Spleen (tissue), 13 donors: ENCODE measurements at regions of chr9 and their contacts with region 1.

Region 1: GRCh38 chr9:20622330-20623020 is at the start of gene MLLT3:
- DNase-seq: peak; percentile 99
- H3K4me3 ChIP-seq: peak within 1 kb of the TSS; percentile 80 to 95 (median 90)
- H3K27ac ChIP-seq: peak within 1 kb of the TSS; percentile 70 to 91 (median 87)
- H3K4me1 ChIP-seq: peaks cover 11 to 68% (median 34%) of the 10 kb centered on the region in 6 donors
- H3K27me3 ChIP-seq: peaks cover 0 to 15% (median 0%) of the 10 kb centered on the region in 7 donors
- CTCF ChIP-seq: no peak
- POLR2A ChIP-seq: peak in 1 of 3 donors; percentile 58
- total RNA-seq, gene MLLT3: 9.3 to 15.2 (median 12.4) TPM

Region 2: GRCh38 chr9:20361656-20362570 is 260.6 kb before region 1 on chr9:
- intact Hi-C with region 1: loop called (anchors 10 kb)
- DNase-seq: no peak
- H3K4me3 ChIP-seq: no peak overlapping the region
- H3K27ac ChIP-seq: no peak overlapping the region
- H3K4me1 ChIP-seq: peaks cover 0 to 8% (median 0%) of the 10 kb centered on the region in 6 donors
- H3K27me3 ChIP-seq: no peaks in the 10 kb centered on the region
- CTCF ChIP-seq: no peak
- POLR2A ChIP-seq: no peak

Region 3: GRCh38 chr9:20684035-20684872 is 61.8 kb after region 1 on chr9 and contains the start of gene FOCAD:
- intact Hi-C with region 1: loop called (anchors 5 kb)
- DNase-seq: peak; percentile 100
- H3K4me3 ChIP-seq: peak within 1 kb of the TSS; percentile 66 to 95 (median 83)
- H3K27ac ChIP-seq: peak within 1 kb of the TSS; percentile 81 to 91 (median 88)
- H3K4me1 ChIP-seq: peaks cover 7 to 39% (median 22%) of the 10 kb centered on the region in 6 donors
- H3K27me3 ChIP-seq: no peaks in the 10 kb centered on the region
- CTCF ChIP-seq: peak in 6 of 11 experiments; percentile 3 to 52 (median 37)
- POLR2A ChIP-seq: peak; percentile 70 to 97 (median 71)
- total RNA-seq, gene FOCAD: 10.8 to 33.2 (median 23.7) TPM

Region 4: DNA sequence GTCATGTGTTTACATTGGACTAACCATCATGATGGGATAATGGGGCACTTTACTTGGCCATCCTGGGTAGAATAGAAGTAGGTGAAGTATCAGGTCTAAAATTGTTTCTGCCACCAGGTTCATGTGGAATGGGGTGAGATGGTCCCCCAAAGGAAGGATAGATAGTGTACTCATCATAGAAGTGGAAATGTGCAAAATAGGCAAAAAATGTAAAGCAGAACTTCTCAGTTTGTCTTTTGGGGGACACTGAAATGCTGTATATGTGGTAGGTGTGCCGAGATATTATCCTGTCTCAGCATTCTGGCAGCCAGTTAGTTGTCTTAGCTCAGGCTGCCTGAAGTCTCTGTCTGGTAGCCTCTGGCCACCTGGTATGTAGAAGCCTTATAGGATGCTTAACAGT is 169.2 kb after region 1 on chr9:
- intact Hi-C with region 1: no loop called
- DNase-seq: no peak
- H3K4me3 ChIP-seq: no peak overlapping the region
- H3K27ac ChIP-seq: no peak overlapping the region
- H3K4me1 ChIP-seq: no peaks in the 10 kb centered on the region
- H3K27me3 ChIP-seq: no peaks in the 10 kb centered on the region
- CTCF ChIP-seq: no peak
- POLR2A ChIP-seq: no peak

Region 5: GRCh38 chr9:20941174-20941690 is 318.8 kb after region 1 on chr9:
- intact Hi-C with region 1: loop called (anchors 5 kb)
- DNase-seq: no peak
- H3K4me3 ChIP-seq: no peak overlapping the region
- H3K27ac ChIP-seq: no peak overlapping the region
- H3K4me1 ChIP-seq: peaks cover 0 to 6% (median 3%) of the 10 kb centered on the region in 6 donors
- H3K27me3 ChIP-seq: no peaks in the 10 kb centered on the region
- CTCF ChIP-seq: peak; percentile 60 to 88 (median 79)
- POLR2A ChIP-seq: no peak